K562 (cell line): ENCODE measurements at regions of chr4 and their contacts with region 1.

Region 1: GRCh38 chr4:5399790-5400421 is 308.5 kb downstream of the EVC2 start:
- DNase-seq: peak; percentile 38 to 65 (median 51)
- ATAC-seq: peak; percentile 79
- H3K4me3 ChIP-seq: no peak overlapping the region
- H3K27ac ChIP-seq: no peak overlapping the region
- H3K4me1 ChIP-seq: no peaks in the 10 kb centered on the region
- H3K27me3 ChIP-seq: no peaks in the 10 kb centered on the region; a peak in 1 of 5 replicates
- CTCF ChIP-seq: peak; percentile 56 to 68 (median 67)
- EP300 ChIP-seq: no peak
- POLR2A ChIP-seq: no peak
- RAD21 ChIP-seq: peak; percentile 21 to 49; a peak in 3 of 4 replicates

Region 2: DNA sequence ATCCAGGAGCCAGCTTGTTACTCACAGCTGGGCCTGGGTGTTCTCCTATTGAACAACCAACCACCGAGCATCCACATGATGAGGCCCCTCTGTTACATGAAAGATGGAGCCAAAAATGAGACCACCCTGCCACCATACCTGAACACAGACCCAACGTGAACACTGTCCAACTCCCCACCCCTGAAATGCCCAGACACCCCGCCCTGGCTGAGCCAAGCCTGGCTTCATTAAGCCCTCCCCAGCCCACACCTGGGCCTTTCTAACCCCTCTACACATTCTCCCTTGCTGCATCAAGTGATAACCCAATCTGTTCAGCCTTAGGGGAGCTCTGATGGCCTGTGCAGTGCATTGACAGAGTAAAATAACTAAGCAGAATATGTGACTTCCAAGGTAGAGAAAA is 391.7 kb after region 1 on chr4:
- CTCF ChIA-PET with region 1: no interaction called
- POLR2A ChIA-PET with region 1: no interaction called
- in situ Hi-C with region 1: loop called (anchors 10 kb)
- intact Hi-C with region 1: loop called (anchors 2 kb)
- DNase-seq: no peak
- ATAC-seq: no peak
- H3K4me3 ChIP-seq: no peak overlapping the region
- H3K27ac ChIP-seq: no peak overlapping the region
- H3K4me1 ChIP-seq: no peaks in the 10 kb centered on the region
- H3K27me3 ChIP-seq: peaks cover 0 to 7% of the 10 kb centered on the region in 2 experiments; a peak in 1 of 5 replicates
- CTCF ChIP-seq: no peak
- EP300 ChIP-seq: no peak
- POLR2A ChIP-seq: no peak
- RAD21 ChIP-seq: no peak

Region 3: GRCh38 chr4:5798462-5798861 is 398.6 kb after region 1 on chr4:
- CTCF ChIA-PET with region 1: no interaction called
- POLR2A ChIA-PET with region 1: no interaction called
- in situ Hi-C with region 1: loop called (anchors 10 kb)
- intact Hi-C with region 1: no loop called
- DNase-seq: no peak
- ATAC-seq: no peak
- H3K4me3 ChIP-seq: no peak overlapping the region
- H3K27ac ChIP-seq: no peak overlapping the region
- H3K4me1 ChIP-seq: no peaks in the 10 kb centered on the region
- H3K27me3 ChIP-seq: peaks cover 0 to 16% of the 10 kb centered on the region in 2 experiments; a peak in 1 of 5 replicates
- CTCF ChIP-seq: no peak
- EP300 ChIP-seq: no peak
- POLR2A ChIP-seq: no peak
- RAD21 ChIP-seq: no peak